ENCODE measurements at regions of chr16 and their contacts with region 1.

Region 1: GRCh38 chr16:70770626-70771552 is 30.1 kb downstream of the VAC14 start:
- DNase-seq: peak; percentile 20 to 70 (median 38)
- ATAC-seq: peak; percentile 76
- H3K4me3 ChIP-seq: no peak overlapping the region
- H3K4me3 Mint-ChIP-seq: no peak overlapping the region
- H3K27ac ChIP-seq: no peak overlapping the region
- H3K27ac Mint-ChIP-seq: peak overlapping the region in 3 of 9 donors; percentile 12 to 26 (median 13)
- H3K4me1 ChIP-seq: no peaks in the 10 kb centered on the region
- H3K4me1 Mint-ChIP-seq: peaks cover 0 to 8% (median 0%) of the 10 kb centered on the region in 7 donors
- H3K27me3 ChIP-seq: no peaks in the 10 kb centered on the region
- H3K27me3 Mint-ChIP-seq: no peaks in the 10 kb centered on the region

Region 2: DNA sequence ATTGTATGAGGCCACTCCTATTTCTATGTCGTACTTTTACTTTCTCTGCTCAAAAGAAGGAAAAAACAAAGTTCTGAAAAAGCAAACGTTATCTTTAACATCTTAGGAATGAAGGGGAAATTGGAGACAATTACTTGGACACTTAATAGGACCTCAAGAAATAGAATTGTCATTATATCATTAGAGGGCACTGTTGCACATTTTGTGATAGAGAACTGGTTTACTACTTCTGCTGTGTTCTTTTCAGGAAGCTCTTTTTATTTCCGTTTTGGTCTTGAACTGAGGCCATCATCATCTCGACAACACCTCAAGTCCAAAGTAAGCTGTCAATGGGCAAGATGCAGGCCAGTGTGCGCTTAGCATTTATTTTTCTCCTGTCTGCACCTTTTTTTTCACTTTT is 262.1 kb before region 1 on chr16:
- CTCF ChIA-PET with region 1: no interaction called
- POLR2A ChIA-PET with region 1: no interaction called
- intact Hi-C with region 1: loop called in 1 of 2 experiments (anchors 2 kb)
- DNase-seq: peak in 2 of 9 donors; percentile 5 to 16
- ATAC-seq: peak; percentile 63
- H3K4me3 ChIP-seq: no peak overlapping the region
- H3K4me3 Mint-ChIP-seq: no peak overlapping the region
- H3K27ac ChIP-seq: no peak overlapping the region
- H3K27ac Mint-ChIP-seq: peak overlapping the region in 8 of 9 donors; percentile 35 to 87 (median 70)
- H3K4me1 ChIP-seq: no peaks in the 10 kb centered on the region
- H3K4me1 Mint-ChIP-seq: peaks cover 6 to 13% (median 9%) of the 10 kb centered on the region in 7 donors
- H3K27me3 ChIP-seq: no peaks in the 10 kb centered on the region
- H3K27me3 Mint-ChIP-seq: no peaks in the 10 kb centered on the region

Region 3: GRCh38 chr16:70679666-70680494 is 91.0 kb before region 1 on chr16:
- CTCF ChIA-PET with region 1: interaction called, 33 read pairs
- POLR2A ChIA-PET with region 1: interaction called, 4 read pairs
- intact Hi-C with region 1: loop called (anchors 1 kb)
- DNase-seq: peak in 2 of 9 donors; percentile 7 to 37
- ATAC-seq: no peak
- H3K4me3 ChIP-seq: no peak overlapping the region
- H3K4me3 Mint-ChIP-seq: no peak overlapping the region
- H3K27ac ChIP-seq: no peak overlapping the region
- H3K27ac Mint-ChIP-seq: no peak overlapping the region
- H3K4me1 ChIP-seq: peaks cover 0 to 3% of the 10 kb centered on the region in 2 donors
- H3K4me1 Mint-ChIP-seq: peaks cover 0 to 7% (median 0%) of the 10 kb centered on the region in 7 donors
- H3K27me3 ChIP-seq: peaks cover 0 to 4% of the 10 kb centered on the region in 2 donors
- H3K27me3 Mint-ChIP-seq: peaks cover 0 to 8% (median 3%) of the 10 kb centered on the region in 5 donors

Region 4: GRCh38 chr16:70685938-70686375 is 84.9 kb before region 1 on chr16 and contains the start of gene MTSS2:
- CTCF ChIA-PET with region 1: interaction called, 33 read pairs
- POLR2A ChIA-PET with region 1: interaction called, 4 read pairs
- intact Hi-C with region 1: no loop called
- DNase-seq: peak in 4 of 9 donors; percentile 14 to 41 (median 24)
- ATAC-seq: peak; percentile 45
- H3K4me3 ChIP-seq: no peak within 1 kb of the TSS
- H3K4me3 Mint-ChIP-seq: peak within 1 kb of the TSS; percentile 42 to 77 (median 70)
- H3K27ac ChIP-seq: no peak within 1 kb of the TSS
- H3K27ac Mint-ChIP-seq: peak within 1 kb of the TSS in 1 of 9 donors; percentile 14
- H3K4me1 ChIP-seq: peaks cover 0 to 7% of the 10 kb centered on the region in 2 donors
- H3K4me1 Mint-ChIP-seq: peaks cover 0 to 8% (median 4%) of the 10 kb centered on the region in 7 donors
- H3K27me3 ChIP-seq: peaks cover 0 to 6% of the 10 kb centered on the region in 2 donors
- H3K27me3 Mint-ChIP-seq: peaks cover 0 to 26% (median 4%) of the 10 kb centered on the region in 5 donors
- total RNA-seq, gene MTSS2: 1.4 to 16.7 (median 11.5) TPM

Region 5: DNA sequence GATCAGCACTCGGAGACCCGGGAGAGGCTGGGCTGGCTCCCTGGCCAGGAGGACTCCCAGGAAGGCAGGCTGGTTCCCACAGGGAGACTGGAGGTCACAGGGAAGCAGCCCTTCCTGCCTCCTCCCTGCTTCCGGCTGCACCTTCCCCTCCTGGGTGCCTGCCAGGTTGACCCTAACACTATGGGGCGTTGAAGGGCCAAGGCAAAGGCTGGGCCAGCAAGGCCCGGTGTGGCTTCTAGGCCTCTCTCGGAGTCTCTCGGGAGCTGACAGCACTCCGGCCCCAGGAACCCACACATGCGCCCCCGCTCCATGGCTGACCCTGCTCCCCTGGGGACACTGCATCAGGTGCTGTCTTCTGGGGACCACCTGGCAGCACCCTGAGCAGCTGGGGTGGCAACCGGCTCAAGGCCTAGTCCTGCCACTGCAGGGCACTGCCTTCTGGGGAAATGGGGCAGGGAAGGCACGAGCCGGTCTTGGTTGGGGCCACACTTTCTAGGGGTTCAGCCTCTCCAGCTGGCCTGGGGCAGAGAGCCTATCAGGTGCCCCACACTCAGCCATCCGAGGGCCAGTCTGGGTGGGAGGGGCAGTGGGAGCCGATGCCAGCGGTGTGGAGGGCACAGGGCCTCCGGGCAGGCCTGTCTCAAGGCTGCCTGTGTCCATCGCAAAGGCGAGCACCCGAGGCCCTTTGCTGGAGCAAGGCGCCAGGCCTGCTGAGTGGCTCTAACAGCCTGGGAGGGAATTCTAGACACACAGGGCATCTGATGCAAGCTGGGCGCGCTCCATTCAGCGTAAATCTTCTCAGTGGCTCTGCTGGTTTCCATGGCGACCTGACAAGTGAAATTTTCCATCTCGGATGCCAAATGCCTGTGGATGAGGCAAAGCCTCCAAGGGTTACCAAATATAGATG is 79.4 kb before region 1 on chr16:
- CTCF ChIA-PET with region 1: interaction called, 12 read pairs
- POLR2A ChIA-PET with region 1: no interaction called
- intact Hi-C with region 1: loop called in 1 of 2 experiments (anchors 5 kb)
- DNase-seq: no peak
- ATAC-seq: no peak
- H3K4me3 ChIP-seq: no peak overlapping the region
- H3K4me3 Mint-ChIP-seq: no peak overlapping the region
- H3K27ac ChIP-seq: no peak overlapping the region
- H3K27ac Mint-ChIP-seq: no peak overlapping the region
- H3K4me1 ChIP-seq: peaks cover 0 to 8% of the 10 kb centered on the region in 2 donors
- H3K4me1 Mint-ChIP-seq: peaks cover 10 to 20% (median 15%) of the 10 kb centered on the region in 7 donors
- H3K27me3 ChIP-seq: no peaks in the 10 kb centered on the region
- H3K27me3 Mint-ChIP-seq: peaks cover 0 to 9% (median 2%) of the 10 kb centered on the region in 5 donors

Region 6: DNA sequence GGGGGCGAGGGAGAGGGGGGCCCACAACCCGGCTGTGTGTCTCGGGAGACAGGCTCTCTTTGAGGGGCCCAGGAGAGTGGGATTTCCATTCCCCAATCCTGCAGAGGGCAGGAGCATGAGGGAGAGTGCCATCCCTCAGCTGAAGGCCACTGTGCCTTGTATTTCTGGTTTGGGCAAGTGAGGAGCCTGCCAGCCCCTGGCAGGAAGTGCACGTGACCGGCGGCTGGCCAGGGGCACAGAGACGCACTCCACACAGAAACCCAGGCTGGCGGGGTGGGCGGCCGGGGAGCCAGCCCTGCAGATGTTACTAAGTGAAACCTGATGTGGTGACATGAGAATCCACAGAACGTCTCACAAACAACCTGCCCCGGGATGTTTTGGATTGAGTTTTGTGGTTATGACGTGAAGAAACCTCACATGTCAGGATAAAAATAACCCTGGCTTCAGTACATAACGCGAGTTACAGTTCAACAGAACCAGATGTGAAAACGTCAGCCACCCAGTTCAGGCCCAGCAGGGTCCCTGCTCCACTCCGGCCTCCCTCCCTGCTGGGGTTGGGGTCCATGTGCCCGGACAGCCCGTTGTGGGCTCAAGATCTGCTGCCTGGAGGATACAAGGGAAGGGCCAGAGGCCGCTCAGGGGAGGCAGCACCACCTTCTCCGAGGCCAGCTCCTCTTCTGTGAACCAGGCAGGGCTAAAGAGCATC is 33.4 kb before region 1 on chr16:
- CTCF ChIA-PET with region 1: interaction called, 32 read pairs
- POLR2A ChIA-PET with region 1: interaction called, 10 read pairs
- intact Hi-C with region 1: loop called (anchors 1 to 2 kb)
- DNase-seq: peak; percentile 41 to 88 (median 81)
- ATAC-seq: peak; percentile 91
- H3K4me3 ChIP-seq: no peak overlapping the region
- H3K4me3 Mint-ChIP-seq: peak overlapping the region; percentile 60 to 90 (median 78)
- H3K27ac ChIP-seq: peak overlapping the region; percentile 76
- H3K27ac Mint-ChIP-seq: peak overlapping the region; percentile 87 to 100 (median 98)
- H3K4me1 ChIP-seq: peaks cover 18 to 32% of the 10 kb centered on the region in 2 donors
- H3K4me1 Mint-ChIP-seq: peaks cover 25 to 70% (median 48%) of the 10 kb centered on the region in 7 donors
- H3K27me3 ChIP-seq: no peaks in the 10 kb centered on the region
- H3K27me3 Mint-ChIP-seq: no peaks in the 10 kb centered on the region

Region 7: DNA sequence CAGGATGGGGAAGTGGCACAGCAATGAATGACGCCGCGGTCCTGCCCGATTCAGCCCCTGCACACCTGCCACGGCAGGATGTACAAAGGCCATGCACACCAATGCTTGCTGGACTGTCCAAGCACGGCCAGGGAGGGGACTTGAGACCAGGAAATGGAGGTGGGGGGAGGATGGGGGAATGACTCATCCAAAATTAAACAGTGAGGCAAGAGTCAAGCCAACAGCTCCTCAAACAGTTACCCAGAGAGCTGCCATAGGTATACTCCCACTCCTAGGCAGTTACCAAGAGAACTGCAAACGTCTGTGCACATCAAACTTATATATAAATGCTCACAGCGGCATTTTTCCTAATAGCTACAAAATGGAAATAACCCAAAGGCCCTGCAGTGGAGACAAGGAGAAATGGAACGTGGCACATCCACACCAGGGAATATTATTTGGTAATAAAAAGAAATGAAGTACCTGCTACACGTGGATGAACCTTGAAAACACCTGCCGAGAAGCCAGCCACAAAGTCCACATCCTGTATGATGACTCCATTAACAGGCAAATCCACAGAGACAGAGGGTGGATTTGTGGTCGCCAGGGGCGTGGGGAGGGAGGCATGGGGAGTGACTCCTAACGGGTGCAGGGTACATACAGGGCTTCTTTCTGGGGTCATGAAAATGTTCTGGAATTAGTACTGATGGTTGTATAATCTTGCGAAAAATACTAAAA is 24.0 kb before region 1 on chr16:
- CTCF ChIA-PET with region 1: interaction called, 15 read pairs
- POLR2A ChIA-PET with region 1: interaction called, 9 read pairs
- intact Hi-C with region 1: loop called in 1 of 2 experiments (anchors 1 kb)
- DNase-seq: peak in 7 of 9 donors; percentile 37 to 71 (median 43)
- ATAC-seq: peak; percentile 55
- H3K4me3 ChIP-seq: no peak overlapping the region
- H3K4me3 Mint-ChIP-seq: peak overlapping the region in 2 of 10 donors; percentile 56 to 57
- H3K27ac ChIP-seq: no peak overlapping the region
- H3K27ac Mint-ChIP-seq: peak overlapping the region in 8 of 9 donors; percentile 61 to 93 (median 84)
- H3K4me1 ChIP-seq: peaks cover 0 to 7% of the 10 kb centered on the region in 2 donors
- H3K4me1 Mint-ChIP-seq: peaks cover 12 to 56% (median 20%) of the 10 kb centered on the region in 7 donors
- H3K27me3 ChIP-seq: no peaks in the 10 kb centered on the region
- H3K27me3 Mint-ChIP-seq: no peaks in the 10 kb centered on the region

Measured in naive thymus-derived CD4-positive, alpha-beta T cell (primary cell).